Posterior cingulate gyrus (tissue), 11 donors: ENCODE measurements at regions of chr2 and their contacts with region 1.

Region 1: GRCh38 chr2:223601932-223602666 is at the start of gene SCG2:
- DNase-seq: peak; percentile 54 to 96 (median 78)

Region 2: GRCh38 chr2:222969491-222969890 is 632.6 kb before region 1 on chr2:
- intact Hi-C with region 1: loop called (anchors 2 kb)
- DNase-seq: no peak

Region 3: DNA sequence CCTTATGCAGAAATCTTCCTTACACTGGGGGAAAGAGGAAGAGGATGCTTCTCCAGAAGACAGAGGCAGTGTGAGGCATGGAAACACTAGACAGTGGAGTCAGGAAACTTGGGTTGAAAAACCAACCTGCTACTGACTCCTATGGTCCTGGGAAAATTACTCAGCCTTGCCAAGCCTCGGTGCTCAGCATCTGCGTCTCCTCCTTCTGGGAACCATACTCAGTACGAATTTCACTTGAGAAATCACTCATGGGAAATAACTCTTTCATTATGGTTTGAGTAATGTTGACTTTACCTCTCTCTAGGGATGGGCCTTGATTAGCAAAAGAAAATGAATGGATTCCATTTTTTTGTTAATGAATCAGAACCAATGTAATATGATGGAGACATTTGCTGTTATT is 453.6 kb before region 1 on chr2:
- intact Hi-C with region 1: no loop called
- DNase-seq: no peak